ENCODE measurements at regions of chr1 and their contacts with region 1.

Region 1: GRCh38 chr1:2205191-2205952 is 10.8 kb upstream of the FAAP20 start:
- DNase-seq: peak in 1 of 4 experiments; percentile 95
- ATAC-seq: peak; percentile 87
- H3K4me3 ChIP-seq: peak overlapping the region; percentile 45
- H3K27ac ChIP-seq: peak overlapping the region; percentile 78
- H3K4me1 ChIP-seq: peaks cover 34 to 84% of the 10 kb centered on the region in 2 experiments
- H3K27me3 ChIP-seq: no peaks in the 10 kb centered on the region
- CTCF ChIP-seq: 0 out of 6 replicates have a peak, but pooled peaks of 1 of the 3 experiments have one; percentile 25
- EP300 ChIP-seq: peak; percentile 7; the same call in 1 of the 2 replicates
- POLR2A ChIP-seq: peak; percentile 54
- RAD21 ChIP-seq: peak in 1 of 2 experiments; percentile 30; a peak in 1 of 4 replicates

Region 2: GRCh38 chr1:2135441-2135841 is 69.9 kb before region 1 on chr1:
- CTCF ChIA-PET with region 1: no interaction called
- POLR2A ChIA-PET with region 1: no interaction called
- in situ Hi-C with region 1: no loop called
- intact Hi-C with region 1: no loop called
- DNase-seq: no peak
- ATAC-seq: no peak
- H3K4me3 ChIP-seq: no peak overlapping the region
- H3K27ac ChIP-seq: no peak overlapping the region
- H3K4me1 ChIP-seq: peaks cover 8 to 43% of the 10 kb centered on the region in 2 experiments
- H3K27me3 ChIP-seq: peaks cover 42 to 71% of the 10 kb centered on the region in 2 experiments
- CTCF ChIP-seq: no peak
- EP300 ChIP-seq: no peak
- POLR2A ChIP-seq: no peak
- RAD21 ChIP-seq: no peak

Region 3: DNA sequence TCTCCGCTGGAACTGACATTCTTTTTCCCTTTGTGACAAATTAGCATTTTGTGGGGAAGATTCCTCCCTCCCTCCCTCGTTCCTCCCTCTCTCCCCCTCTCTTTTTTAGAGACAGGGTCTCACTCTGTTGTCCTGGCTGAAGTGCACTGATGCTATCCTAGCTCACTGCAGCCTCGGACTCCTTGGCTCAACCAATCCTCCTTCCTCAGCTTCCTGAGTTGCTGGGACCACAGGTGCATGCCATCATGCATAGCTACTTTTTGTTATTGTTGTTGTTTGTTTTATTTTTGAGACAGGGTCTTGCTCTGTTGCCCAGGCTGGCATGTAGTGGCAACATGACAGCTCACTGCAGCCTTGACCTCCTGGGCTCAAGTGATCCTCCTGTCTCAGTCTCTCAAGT is 15.9 kb after region 1 on chr1:
- CTCF ChIA-PET with region 1: no interaction called
- POLR2A ChIA-PET with region 1: interaction called, 27 read pairs
- in situ Hi-C with region 1: no loop called
- intact Hi-C with region 1: loop called (anchors 2 kb)
- DNase-seq: no peak
- ATAC-seq: no peak
- H3K4me3 ChIP-seq: no peak overlapping the region
- H3K27ac ChIP-seq: no peak overlapping the region
- H3K4me1 ChIP-seq: peaks cover under 1 to 11% of the 10 kb centered on the region in 2 experiments; a peak in 2 of 5 replicates
- H3K27me3 ChIP-seq: no peaks in the 10 kb centered on the region
- CTCF ChIP-seq: no peak
- EP300 ChIP-seq: no peak
- POLR2A ChIP-seq: no peak
- RAD21 ChIP-seq: no peak

Measured in K562 (cell line).